ENCODE measurements at regions of chr3 and their contacts with region 1.

Region 1: GRCh38 chr3:172039436-172040077 is at the start of gene FNDC3B:
- DNase-seq: peak; percentile 89
- ATAC-seq: peak; percentile 80
- H3K4me3 ChIP-seq: peak within 1 kb of the TSS; percentile 93 to 99 (median 95)
- H3K27ac ChIP-seq: peak within 1 kb of the TSS; percentile 99
- H3K4me1 ChIP-seq: peaks cover 50% of the 10 kb centered on the region
- H3K27me3 ChIP-seq: no peaks in the 10 kb centered on the region; a peak in 1 of 5 replicates
- CTCF ChIP-seq: no peak
- EP300 ChIP-seq: peak in 1 of 2 experiments; percentile 61; a peak in 2 of 4 replicates
- POLR2A ChIP-seq: peak in 1 of 2 experiments; percentile 76; a peak in 3 of 4 replicates
- RAD21 ChIP-seq: peak; percentile 37; the same call in 1 of the 2 replicates
- total RNA-seq, gene FNDC3B: 103 and 110 TPM in 2 replicates

Region 2: GRCh38 chr3:171162986-171163723 is 876.4 kb before region 1 on chr3:
- CTCF ChIA-PET with region 1: no interaction called
- POLR2A ChIA-PET with region 1: no interaction called
- in situ Hi-C with region 1: no loop called
- intact Hi-C with region 1: no loop called
- DNase-seq: no peak
- ATAC-seq: no peak
- H3K4me3 ChIP-seq: no peak overlapping the region
- H3K27ac ChIP-seq: no peak overlapping the region
- H3K4me1 ChIP-seq: peaks cover 7% of the 10 kb centered on the region
- H3K27me3 ChIP-seq: no peaks in the 10 kb centered on the region; a peak in 1 of 5 replicates
- CTCF ChIP-seq: peak; percentile 46
- EP300 ChIP-seq: no peak
- POLR2A ChIP-seq: no peak
- RAD21 ChIP-seq: no peak

Region 3: DNA sequence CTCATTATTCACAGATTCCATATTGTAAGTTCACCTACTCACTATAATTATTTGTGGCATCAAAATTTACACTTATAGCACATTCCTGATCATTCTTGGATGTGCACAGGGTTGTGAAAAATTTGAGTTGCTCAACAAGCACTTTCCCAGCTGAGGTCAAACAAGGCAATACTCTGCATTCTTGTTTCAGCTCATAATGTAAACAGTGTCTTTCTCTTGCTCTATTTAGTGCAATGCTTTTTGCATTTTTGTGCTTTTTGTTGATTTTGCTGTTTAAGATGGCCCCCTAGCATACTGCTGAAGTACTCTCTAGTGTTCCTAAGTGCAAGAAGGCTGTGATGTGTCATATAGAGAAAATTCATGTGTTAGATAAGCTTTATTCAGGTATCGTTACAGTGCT is 512.7 kb before region 1 on chr3:
- CTCF ChIA-PET with region 1: no interaction called
- POLR2A ChIA-PET with region 1: no interaction called
- in situ Hi-C with region 1: no loop called
- intact Hi-C with region 1: no loop called
- DNase-seq: peak; percentile 28
- ATAC-seq: peak; percentile 59
- H3K4me3 ChIP-seq: no peak overlapping the region
- H3K27ac ChIP-seq: no peak overlapping the region
- H3K4me1 ChIP-seq: peaks cover 5% of the 10 kb centered on the region; the same call in 1 of the 2 replicates
- H3K27me3 ChIP-seq: no peaks in the 10 kb centered on the region
- CTCF ChIP-seq: no peak
- EP300 ChIP-seq: no peak
- POLR2A ChIP-seq: no peak
- RAD21 ChIP-seq: no peak

Region 4: DNA sequence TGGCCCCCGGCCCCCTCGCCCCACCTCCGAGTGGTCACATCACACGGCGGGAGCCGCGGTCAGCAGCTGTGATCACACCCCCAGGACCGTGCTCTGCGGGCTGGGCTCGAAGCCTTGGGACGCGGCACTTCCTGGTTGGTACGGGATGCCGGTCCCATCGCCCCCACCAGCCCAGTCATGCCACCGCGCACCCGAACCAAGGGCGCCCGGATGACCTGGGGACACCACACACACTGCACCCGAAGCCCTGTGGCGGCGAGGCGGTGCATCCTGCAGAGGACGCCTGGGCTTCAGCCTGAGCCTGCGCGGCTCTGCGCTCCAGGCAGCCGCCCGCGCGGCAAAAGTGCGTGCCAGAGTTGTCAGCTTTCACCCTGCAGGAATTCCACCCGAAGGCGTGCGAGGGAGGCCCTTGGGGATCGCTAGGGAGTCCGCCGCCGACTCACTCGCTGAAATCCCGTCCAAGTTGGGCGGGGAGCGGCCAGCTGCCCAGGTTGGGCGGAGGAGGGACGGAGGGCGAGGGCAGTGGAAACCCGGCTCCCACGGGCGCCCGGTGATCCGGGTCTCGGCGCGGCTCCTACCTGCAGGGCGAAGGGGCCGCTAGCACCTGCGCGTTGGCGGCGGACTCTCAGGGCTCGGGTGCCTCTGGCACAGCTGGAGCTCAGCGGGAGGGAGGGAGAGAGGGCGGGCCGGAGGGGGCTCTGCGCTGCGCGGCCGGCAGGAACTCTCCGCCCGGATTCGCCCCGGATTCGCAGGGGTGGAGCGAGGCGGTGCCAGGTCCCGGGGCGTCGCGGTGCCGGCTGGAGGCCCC is 229.5 kb before region 1 on chr3 and contains the start of gene PLD1:
- CTCF ChIA-PET with region 1: no interaction called
- POLR2A ChIA-PET with region 1: interaction called, 10 read pairs
- in situ Hi-C with region 1: no loop called
- intact Hi-C with region 1: loop called (anchors 5 kb)
- DNase-seq: peak; percentile 77
- ATAC-seq: peak; percentile 87
- H3K4me3 ChIP-seq: peak within 1 kb of the TSS; percentile 73 to 91 (median 85)
- H3K27ac ChIP-seq: peak within 1 kb of the TSS; percentile 96
- H3K4me1 ChIP-seq: peaks cover 62% of the 10 kb centered on the region
- H3K27me3 ChIP-seq: no peaks in the 10 kb centered on the region; a peak in 1 of 5 replicates
- CTCF ChIP-seq: peak; percentile 38
- EP300 ChIP-seq: peak in 1 of 2 experiments; percentile 66; a peak in 1 of 4 replicates
- POLR2A ChIP-seq: peak in 1 of 2 experiments; percentile 75; a peak in 2 of 4 replicates
- RAD21 ChIP-seq: peak; percentile 40
- total RNA-seq, gene PLD1: 27.1 and 33.6 TPM in 2 replicates

Region 5: DNA sequence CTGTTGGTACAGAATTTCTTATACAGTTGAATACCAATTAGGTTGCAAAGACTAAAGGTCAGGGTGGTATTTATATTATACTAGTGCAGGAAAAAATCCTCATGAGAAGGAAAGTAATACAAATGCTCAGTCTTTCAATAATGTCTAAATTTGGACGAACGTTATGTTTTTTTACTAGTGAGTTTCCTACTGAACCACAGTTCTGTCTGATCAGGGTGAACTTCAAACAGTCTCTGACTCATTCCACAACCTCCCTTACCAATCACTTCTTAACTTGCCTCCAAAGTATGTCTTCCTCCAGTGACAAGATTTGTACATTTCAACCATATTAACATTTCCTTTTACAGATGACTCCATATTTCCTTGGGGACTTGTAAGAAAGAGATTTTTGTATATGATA is 193.0 kb before region 1 on chr3:
- CTCF ChIA-PET with region 1: no interaction called
- POLR2A ChIA-PET with region 1: interaction called, 66 read pairs
- in situ Hi-C with region 1: loop called (anchors 10 kb)
- intact Hi-C with region 1: loop called (anchors 2 kb)
- DNase-seq: no peak
- ATAC-seq: peak; percentile 34; the same call in 2 of the 3 replicates
- H3K4me3 ChIP-seq: no peak overlapping the region
- H3K27ac ChIP-seq: peak overlapping the region; percentile 100
- H3K4me1 ChIP-seq: peaks cover 88% of the 10 kb centered on the region
- H3K27me3 ChIP-seq: no peaks in the 10 kb centered on the region
- CTCF ChIP-seq: no peak
- EP300 ChIP-seq: 0 out of 4 replicates have a peak, but pooled peaks of 1 of the 2 experiments have one; percentile 6
- POLR2A ChIP-seq: no peak
- RAD21 ChIP-seq: no peak

Region 6: GRCh38 chr3:172012775-172013174 is 26.8 kb before region 1 on chr3:
- CTCF ChIA-PET with region 1: no interaction called
- POLR2A ChIA-PET with region 1: no interaction called
- in situ Hi-C with region 1: no loop called
- intact Hi-C with region 1: no loop called
- DNase-seq: no peak
- ATAC-seq: no peak
- H3K4me3 ChIP-seq: no peak overlapping the region; a peak in 1 of 6 replicates
- H3K27ac ChIP-seq: peak overlapping the region; percentile 26
- H3K4me1 ChIP-seq: peaks cover 28% of the 10 kb centered on the region
- H3K27me3 ChIP-seq: no peaks in the 10 kb centered on the region
- CTCF ChIP-seq: no peak
- EP300 ChIP-seq: peak in 1 of 2 experiments; percentile 46; a peak in 2 of 4 replicates
- POLR2A ChIP-seq: no peak
- RAD21 ChIP-seq: no peak

Region 7: GRCh38 chr3:172061724-172062184 is 22.2 kb after region 1 on chr3:
- CTCF ChIA-PET with region 1: no interaction called
- POLR2A ChIA-PET with region 1: interaction called, 19 read pairs
- in situ Hi-C with region 1: no loop called
- intact Hi-C with region 1: loop called (anchors 1 kb)
- DNase-seq: peak; percentile 88
- ATAC-seq: peak; percentile 47
- H3K4me3 ChIP-seq: peak overlapping the region in 1 of 3 experiments; percentile 30; a peak in 2 of 6 replicates
- H3K27ac ChIP-seq: peak overlapping the region; percentile 70
- H3K4me1 ChIP-seq: peaks cover 100% of the 10 kb centered on the region
- H3K27me3 ChIP-seq: no peaks in the 10 kb centered on the region
- CTCF ChIP-seq: no peak
- EP300 ChIP-seq: peak in 1 of 2 experiments; percentile 95; a peak in 2 of 4 replicates
- POLR2A ChIP-seq: no peak
- RAD21 ChIP-seq: no peak

Region 8: DNA sequence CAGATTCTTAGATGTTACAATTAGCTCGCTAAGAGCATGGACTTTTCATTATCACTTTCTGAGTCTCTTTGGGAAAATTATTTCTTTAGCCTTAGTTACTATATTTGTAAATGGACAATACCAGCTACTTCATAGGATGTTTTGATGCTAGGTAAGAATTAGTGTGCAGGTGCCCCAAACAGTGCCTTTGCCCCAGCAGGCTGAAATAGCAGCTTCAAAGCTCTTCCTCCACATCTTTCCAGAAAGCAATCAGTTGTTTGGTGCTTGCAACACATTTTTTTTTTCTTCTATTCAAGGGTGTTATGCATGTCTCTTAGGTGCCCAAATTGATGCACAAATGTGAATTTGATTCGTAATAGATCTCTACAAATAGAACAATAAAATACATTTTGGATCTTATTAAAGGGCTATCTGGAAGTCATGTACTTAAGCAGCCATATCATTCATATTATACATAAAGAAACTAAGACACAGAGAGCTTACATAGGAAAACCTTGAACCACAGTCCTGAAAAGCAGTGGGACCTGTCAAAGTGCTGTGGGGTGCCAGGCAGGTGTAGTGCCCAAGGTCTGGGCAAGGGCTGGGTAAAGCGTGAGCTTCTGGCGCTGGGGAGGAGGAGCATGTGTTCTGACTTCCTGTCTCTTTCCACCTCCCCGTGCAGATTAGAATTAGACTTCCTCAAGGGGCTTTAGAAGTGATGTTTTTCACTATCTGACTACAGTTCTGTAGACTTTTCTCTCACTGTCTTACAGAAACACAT is 62.7 kb after region 1 on chr3:
- CTCF ChIA-PET with region 1: no interaction called
- POLR2A ChIA-PET with region 1: interaction called, 11 read pairs
- in situ Hi-C with region 1: no loop called
- intact Hi-C with region 1: no loop called
- DNase-seq: no peak
- ATAC-seq: peak; percentile 58
- H3K4me3 ChIP-seq: peak overlapping the region in 1 of 3 experiments; percentile 39; a peak in 2 of 6 replicates
- H3K27ac ChIP-seq: peak overlapping the region; percentile 84
- H3K4me1 ChIP-seq: peaks cover 100% of the 10 kb centered on the region
- H3K27me3 ChIP-seq: no peaks in the 10 kb centered on the region
- CTCF ChIP-seq: no peak
- EP300 ChIP-seq: no peak
- POLR2A ChIP-seq: peak; percentile 14 to 33; a peak in 2 of 4 replicates
- RAD21 ChIP-seq: no peak

Measured in HepG2 (cell line).